Common myeloid progenitor, CD34-positive (primary cell): ENCODE measurements at regions of chr7 and their contacts with region 1.

Region 1: DNA sequence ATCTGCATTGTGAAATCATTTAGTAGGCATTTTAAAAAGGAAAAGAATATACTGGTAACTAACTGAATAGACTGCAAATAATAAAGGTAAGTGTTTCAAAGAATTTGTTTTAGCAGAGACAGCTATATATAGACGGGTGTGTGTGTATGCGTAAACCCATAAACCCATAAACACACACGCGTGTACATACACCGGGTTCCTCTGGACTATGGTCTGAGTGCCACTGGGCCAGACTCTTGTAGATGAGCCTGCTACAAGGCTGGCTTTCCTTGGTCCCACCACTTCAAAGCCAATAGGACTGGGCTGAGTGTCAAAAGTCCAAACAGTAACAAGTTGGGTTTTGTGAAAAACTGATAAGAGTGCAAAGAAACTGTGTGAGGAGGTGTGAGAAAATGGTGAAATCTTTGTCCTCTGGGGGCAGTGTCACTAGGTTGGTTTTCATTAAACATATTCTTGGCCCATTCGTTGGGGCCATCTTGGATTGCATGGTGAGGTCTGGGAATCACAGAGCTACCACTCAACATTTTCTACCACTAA is 39.8 kb downstream of the GNA12 start:
- DNase-seq: no peak
- H3K4me3 ChIP-seq: no peak overlapping the region
- H3K27ac ChIP-seq: no peak overlapping the region
- H3K4me1 ChIP-seq: peaks cover 14 to 79% (median 62%) of the 10 kb centered on the region in 4 experiments
- H3K27me3 ChIP-seq: no peaks in the 10 kb centered on the region

Region 2: DNA sequence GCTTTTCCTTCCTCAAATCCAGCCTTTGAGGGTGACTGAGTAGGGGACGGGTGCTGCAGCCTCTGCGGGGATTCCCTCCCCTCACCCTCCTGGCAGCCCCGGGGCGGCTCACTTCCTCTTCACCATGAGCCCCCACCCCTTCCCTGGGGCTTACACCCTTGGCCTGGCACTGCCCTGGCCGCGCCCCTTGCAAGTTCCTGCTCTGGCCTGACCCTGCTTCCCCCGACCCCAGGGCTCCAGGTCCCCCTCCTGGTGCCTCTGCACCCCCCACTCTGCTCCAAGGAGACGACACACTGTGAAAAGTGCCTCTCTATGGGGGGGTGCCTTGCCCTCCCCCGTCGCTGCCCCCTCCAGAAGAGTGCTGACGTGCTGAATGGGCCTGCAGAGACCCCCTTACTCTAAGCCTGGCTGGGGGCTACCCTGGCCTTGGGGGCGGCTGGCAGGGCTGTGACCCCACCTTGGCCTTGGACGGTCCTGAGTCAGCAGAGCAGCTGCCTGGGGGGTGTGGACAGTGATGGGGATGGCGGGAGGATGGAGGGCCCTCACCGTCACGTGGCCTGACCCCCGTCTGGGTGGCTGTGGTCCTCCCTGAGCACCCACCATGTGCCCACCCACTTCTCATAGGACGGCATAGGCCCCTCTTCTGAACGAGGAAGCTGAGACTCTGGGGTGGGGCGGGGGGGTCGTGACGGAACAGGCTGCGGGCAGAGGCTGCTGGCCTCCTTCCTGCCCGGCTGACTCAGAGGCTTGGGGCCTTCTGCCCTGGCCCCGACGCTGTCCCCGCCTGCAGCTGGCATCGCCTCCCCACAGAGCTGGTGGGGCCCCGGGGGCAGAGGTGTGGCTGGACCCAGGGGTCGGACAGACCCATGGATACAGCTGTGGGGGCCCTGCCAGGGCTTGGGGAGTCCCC is 274.9 kb before region 1 on chr7:
- CTCF ChIA-PET with region 1: no interaction called
- POLR2A ChIA-PET with region 1: no interaction called
- DNase-seq: peak; percentile 88 to 97 (median 96)
- H3K4me3 ChIP-seq: peak overlapping the region in 5 of 7 experiments; percentile 27 to 66 (median 50)
- H3K27ac ChIP-seq: peak overlapping the region; percentile 68 to 87
- H3K4me1 ChIP-seq: peaks cover 6 to 71% (median 66%) of the 10 kb centered on the region in 4 experiments
- H3K27me3 ChIP-seq: no peaks in the 10 kb centered on the region

Region 3: DNA sequence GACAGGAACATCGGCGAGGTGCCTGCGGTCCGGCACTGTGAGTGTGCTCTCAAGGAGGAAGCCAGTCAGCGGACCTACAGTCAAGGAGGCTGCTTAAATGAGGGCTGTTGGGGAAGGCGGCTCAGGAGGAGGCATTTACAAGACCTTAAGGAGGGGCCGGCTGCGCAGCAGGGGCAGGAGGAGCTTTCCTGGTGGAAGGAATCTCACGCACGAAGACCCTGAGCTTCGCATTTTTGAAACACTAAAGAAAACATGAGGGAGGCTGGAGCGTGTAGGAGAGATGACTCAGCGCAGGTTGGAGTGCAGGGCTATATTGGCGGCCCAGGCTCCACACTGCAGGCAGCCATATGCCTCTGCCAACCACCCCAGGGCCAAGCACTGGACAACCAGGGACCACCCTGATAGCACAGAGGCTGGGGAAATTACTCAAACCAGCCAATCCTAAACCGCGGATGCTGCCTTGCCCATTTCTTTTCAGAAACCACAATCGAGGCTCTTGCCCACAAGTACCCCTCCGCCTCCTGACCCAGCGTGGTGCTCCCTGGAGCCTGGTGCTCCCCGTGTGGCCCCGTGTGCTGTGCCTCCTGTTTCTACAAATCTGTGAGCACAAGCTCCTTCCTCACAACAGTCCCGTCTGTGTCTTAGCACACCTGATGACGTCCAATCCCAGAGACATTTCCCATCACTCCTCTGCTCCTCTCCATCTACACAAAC is 11.0 kb after region 1 on chr7:
- CTCF ChIA-PET with region 1: interaction called, 10 read pairs
- POLR2A ChIA-PET with region 1: no interaction called
- DNase-seq: no peak
- H3K4me3 ChIP-seq: no peak overlapping the region
- H3K27ac ChIP-seq: no peak overlapping the region
- H3K4me1 ChIP-seq: peaks cover 0 to 24% (median 19%) of the 10 kb centered on the region in 4 experiments
- H3K27me3 ChIP-seq: no peaks in the 10 kb centered on the region

Region 4: GRCh38 chr7:3056234-3057065 is 252.2 kb after region 1 on chr7:
- CTCF ChIA-PET with region 1: no interaction called
- POLR2A ChIA-PET with region 1: no interaction called
- DNase-seq: no peak
- H3K4me3 ChIP-seq: no peak overlapping the region
- H3K27ac ChIP-seq: no peak overlapping the region
- H3K4me1 ChIP-seq: no peaks in the 10 kb centered on the region
- H3K27me3 ChIP-seq: no peaks in the 10 kb centered on the region